CD4-positive, alpha-beta T cell (primary cell): ENCODE measurements at regions of chr3 and their contacts with region 1.

Region 1: DNA sequence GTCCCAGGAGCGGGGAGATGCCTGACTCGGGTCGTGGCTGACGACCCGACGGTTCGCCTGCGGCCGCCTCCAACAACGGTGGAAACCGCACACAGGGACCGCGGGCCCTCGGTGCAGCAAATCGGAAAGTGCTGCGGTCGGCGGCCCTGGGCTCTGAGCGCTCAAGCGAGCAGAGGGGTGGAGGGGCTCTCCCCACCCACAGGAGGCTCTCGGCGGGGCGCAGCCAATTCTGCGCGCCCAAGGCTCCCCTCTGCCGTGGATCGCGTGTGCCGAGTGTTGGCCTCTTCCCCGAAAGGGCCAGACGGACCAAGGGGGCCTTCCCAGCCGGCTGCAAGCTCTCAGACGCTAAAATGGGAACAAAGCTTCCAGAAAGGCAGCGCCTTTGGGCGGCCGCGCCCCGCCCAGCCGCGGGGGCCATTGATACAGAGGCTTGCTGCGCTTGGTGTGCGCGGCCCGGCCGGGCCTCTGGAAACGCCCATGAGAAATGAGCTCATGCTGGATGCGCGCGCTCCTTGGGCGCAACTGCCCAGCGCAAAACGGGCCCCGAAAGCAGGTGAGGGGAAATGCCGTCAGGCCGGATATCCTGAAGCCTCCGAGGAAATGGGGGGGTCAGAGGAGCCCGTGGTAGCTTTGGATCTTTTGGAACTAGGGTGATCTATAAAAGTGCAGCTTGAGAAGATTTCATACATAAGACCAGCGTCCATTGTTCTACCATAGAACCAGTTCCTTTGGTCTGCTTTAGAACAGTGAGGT is 1.2 kb upstream of the GSK3B start:
- DNase-seq: peak; percentile 61 to 94 (median 78)
- ATAC-seq: peak; percentile 19
- H3K4me3 ChIP-seq: peak overlapping the region; percentile 97
- H3K4me3 Mint-ChIP-seq: no peak overlapping the region
- H3K27ac ChIP-seq: peak overlapping the region; percentile 100
- H3K27ac Mint-ChIP-seq: no peak overlapping the region
- H3K4me1 ChIP-seq: peaks cover 20% of the 10 kb centered on the region
- H3K4me1 Mint-ChIP-seq: peaks cover 26% of the 10 kb centered on the region
- H3K27me3 ChIP-seq: no peaks in the 10 kb centered on the region
- H3K27me3 Mint-ChIP-seq: no peaks in the 10 kb centered on the region
- CTCF ChIP-seq: no peak

Region 2: DNA sequence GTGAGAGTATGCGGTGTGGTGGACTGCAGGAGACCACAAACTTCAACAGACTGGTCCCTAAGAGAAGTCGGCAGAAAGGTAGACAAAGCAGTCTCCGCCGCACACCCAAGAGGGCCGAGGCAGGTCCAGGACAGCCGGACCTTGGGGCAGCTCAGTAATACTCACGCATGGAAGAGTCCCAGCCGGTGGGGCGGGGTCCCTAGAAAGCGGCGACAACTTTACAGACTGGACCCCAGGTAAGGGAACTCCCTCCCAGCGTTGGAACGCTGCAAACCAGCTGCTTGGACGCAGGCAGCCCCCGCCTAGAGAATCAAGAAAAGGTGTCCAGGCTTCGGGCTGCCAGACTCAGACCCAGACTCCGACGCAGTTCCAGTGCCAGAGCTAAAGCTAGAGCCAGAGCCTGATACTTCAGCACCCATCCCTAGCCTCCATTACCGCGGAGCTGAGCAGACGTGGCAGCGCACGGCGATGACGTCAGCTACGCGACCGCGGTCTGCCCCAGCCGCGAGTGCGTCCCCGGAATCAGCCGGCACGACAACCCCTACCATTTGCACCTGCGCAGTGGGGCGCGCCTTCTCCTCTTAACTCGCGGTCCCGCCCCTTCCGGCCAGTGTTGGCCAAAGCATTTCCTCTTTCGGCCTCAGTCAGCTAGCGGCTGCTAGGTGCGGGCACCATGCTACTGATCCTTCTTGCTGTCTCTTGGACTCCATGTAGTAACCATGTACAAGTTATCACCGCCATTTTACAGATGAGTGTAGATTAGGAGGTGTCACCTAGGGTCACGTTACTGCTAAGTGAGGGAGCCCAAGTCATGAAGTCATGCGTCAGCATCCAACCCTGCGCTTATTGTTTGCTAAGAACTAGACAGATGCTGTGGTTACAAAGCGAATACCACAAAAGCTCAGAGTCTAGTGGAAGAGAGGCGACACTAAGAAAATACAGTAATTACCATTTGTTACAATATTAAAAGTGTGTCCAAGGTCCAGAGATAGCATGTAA is 631.9 kb before region 1 on chr3 and contains the start of gene TMEM39A:
- CTCF ChIA-PET with region 1: no interaction called
- POLR2A ChIA-PET with region 1: interaction called, 23 read pairs
- intact Hi-C with region 1: loop called (anchors 2 to 10 kb)
- DNase-seq: peak; percentile 97 to 100 (median 98)
- ATAC-seq: peak; percentile 87
- H3K4me3 ChIP-seq: peak within 1 kb of the TSS; percentile 90
- H3K4me3 Mint-ChIP-seq: peak within 1 kb of the TSS; percentile 93
- H3K27ac ChIP-seq: peak within 1 kb of the TSS; percentile 87 to 93
- H3K27ac Mint-ChIP-seq: peak within 1 kb of the TSS; percentile 97
- H3K4me1 ChIP-seq: peaks cover 28% of the 10 kb centered on the region
- H3K4me1 Mint-ChIP-seq: peaks cover 37% of the 10 kb centered on the region
- H3K27me3 ChIP-seq: no peaks in the 10 kb centered on the region
- H3K27me3 Mint-ChIP-seq: peaks cover 4% of the 10 kb centered on the region
- CTCF ChIP-seq: no peak
- total RNA-seq, gene TMEM39A: 54.1 to 58.0 TPM

Region 3: DNA sequence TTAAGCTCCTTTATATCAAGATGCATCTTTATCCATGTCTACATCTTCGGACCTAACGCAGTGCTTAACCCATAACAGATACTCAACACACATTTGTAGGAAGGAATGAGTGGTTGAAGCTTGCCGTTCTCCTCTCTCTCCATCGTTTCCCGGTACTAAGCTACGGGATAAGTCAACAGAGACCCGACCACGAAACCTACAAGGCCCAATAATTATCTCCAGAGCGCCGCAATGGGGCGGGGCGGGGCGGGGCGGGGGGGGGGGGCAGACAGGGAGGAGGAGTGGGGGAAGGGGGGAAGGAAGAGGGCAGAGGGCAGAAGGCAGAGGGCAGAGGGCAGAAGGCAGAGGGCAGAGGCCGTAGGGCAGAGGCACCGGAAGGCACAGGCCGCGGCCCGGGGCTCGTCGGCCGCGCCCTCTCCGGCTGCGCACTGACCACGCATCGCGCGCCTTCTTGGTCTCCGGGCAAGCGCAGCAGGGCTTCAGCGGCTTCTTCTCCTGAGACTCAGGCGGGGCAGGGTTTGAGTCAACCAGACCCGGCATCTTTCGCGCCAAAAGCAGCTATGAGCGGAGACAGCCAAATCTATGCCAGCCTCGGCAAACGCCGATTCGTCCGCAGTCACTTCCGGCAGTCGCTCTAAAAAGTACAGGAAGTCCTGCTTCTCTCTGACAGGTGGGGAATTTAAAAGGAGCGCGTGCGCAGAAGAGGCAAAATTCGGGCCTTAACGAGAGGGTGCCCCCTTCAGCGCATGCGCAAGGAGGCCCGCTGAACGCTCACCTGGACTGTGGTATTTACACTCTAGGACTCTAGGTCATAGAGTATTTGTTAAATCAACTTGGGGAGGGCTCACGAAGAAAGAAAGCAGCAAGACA is 418.4 kb before region 1 on chr3 and contains the start of gene COX17:
- CTCF ChIA-PET with region 1: no interaction called
- POLR2A ChIA-PET with region 1: interaction called, 10 read pairs
- intact Hi-C with region 1: loop called (anchors 5 to 10 kb)
- DNase-seq: peak; percentile 92 to 99 (median 95)
- ATAC-seq: peak; percentile 87
- H3K4me3 ChIP-seq: peak within 1 kb of the TSS; percentile 68
- H3K4me3 Mint-ChIP-seq: peak within 1 kb of the TSS; percentile 87
- H3K27ac ChIP-seq: peak within 1 kb of the TSS; percentile 81 to 85
- H3K27ac Mint-ChIP-seq: peak within 1 kb of the TSS; percentile 91
- H3K4me1 ChIP-seq: peaks cover 8% of the 10 kb centered on the region
- H3K4me1 Mint-ChIP-seq: peaks cover 36% of the 10 kb centered on the region
- H3K27me3 ChIP-seq: no peaks in the 10 kb centered on the region
- H3K27me3 Mint-ChIP-seq: no peaks in the 10 kb centered on the region
- CTCF ChIP-seq: no peak
- total RNA-seq, gene COX17: 24.6 to 26.3 TPM

Region 4: DNA sequence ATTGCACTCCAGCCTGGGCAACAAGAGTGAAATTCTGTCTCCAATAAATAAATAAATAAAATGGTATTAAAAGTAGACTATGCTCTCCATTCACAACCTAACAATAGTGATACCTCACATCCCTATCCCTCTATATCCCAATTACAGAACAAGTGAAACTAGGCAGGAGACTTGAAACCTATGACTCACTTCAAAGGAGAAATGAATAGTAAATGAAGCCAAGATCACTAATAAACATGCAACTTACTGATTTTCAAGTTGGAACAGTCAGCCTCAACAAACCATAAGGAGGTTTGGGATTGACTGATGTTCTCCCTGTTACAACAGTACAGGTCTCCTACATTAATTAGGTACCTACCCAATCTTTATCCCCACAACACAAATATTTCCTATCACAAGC is 104.5 kb before region 1 on chr3:
- CTCF ChIA-PET with region 1: no interaction called
- POLR2A ChIA-PET with region 1: interaction called, 3 read pairs
- intact Hi-C with region 1: loop called in 1 of 2 experiments (anchors 10 kb)
- DNase-seq: no peak
- ATAC-seq: no peak
- H3K4me3 ChIP-seq: no peak overlapping the region
- H3K4me3 Mint-ChIP-seq: no peak overlapping the region
- H3K27ac ChIP-seq: no peak overlapping the region
- H3K27ac Mint-ChIP-seq: no peak overlapping the region
- H3K4me1 ChIP-seq: no peaks in the 10 kb centered on the region
- H3K4me1 Mint-ChIP-seq: peaks cover 52% of the 10 kb centered on the region
- H3K27me3 ChIP-seq: no peaks in the 10 kb centered on the region
- H3K27me3 Mint-ChIP-seq: no peaks in the 10 kb centered on the region
- CTCF ChIP-seq: no peak

Region 5: GRCh38 chr3:120114981-120115380 is 19.6 kb after region 1 on chr3:
- CTCF ChIA-PET with region 1: no interaction called
- POLR2A ChIA-PET with region 1: no interaction called
- intact Hi-C with region 1: no loop called
- DNase-seq: no peak
- ATAC-seq: no peak
- H3K4me3 ChIP-seq: no peak overlapping the region
- H3K4me3 Mint-ChIP-seq: no peak overlapping the region
- H3K27ac ChIP-seq: no peak overlapping the region
- H3K27ac Mint-ChIP-seq: no peak overlapping the region
- H3K4me1 ChIP-seq: no peaks in the 10 kb centered on the region
- H3K4me1 Mint-ChIP-seq: no peaks in the 10 kb centered on the region
- H3K27me3 ChIP-seq: no peaks in the 10 kb centered on the region
- H3K27me3 Mint-ChIP-seq: no peaks in the 10 kb centered on the region
- CTCF ChIP-seq: no peak

Region 6: DNA sequence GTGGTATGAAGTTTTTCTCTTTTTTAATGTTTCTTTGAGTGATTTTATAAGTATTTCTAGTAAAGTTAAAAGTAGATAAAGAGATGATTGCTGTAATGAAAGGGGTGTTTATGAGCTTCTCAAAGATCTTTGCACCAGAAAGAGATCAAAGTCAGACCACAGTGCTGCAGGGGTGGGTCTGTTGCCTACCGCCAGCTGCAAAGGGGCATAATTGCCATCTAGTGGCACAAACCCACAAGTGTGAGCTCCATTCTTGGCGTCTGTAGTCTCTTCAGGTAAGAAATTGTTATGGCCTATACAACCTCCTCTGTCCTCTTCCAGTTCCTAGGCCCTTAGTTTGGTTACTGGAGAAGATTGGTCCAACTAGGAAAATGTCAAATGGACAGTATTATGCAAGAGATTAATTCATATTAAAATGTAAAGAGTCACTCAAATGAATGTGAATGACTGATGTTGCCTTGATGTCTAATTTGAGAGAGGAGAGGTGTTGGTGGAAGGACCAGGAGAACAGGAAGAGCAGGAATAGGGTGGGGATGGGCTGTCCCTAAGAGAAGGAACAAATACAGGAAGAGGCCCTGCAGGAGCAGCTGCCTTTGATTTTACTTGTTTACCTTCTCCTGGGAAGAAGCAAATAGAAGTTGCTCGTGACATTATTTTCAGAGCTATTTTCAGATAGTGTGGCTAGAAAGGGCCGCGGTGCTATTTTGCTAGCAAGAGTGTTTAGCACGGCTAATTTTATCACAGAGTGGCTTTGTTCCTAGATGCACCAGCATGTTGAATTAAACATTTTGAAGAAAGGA is 51.9 kb after region 1 on chr3:
- CTCF ChIA-PET with region 1: interaction called, 4 read pairs
- POLR2A ChIA-PET with region 1: interaction called, 37 read pairs
- intact Hi-C with region 1: loop called in 1 of 2 experiments (anchors 2 kb)
- DNase-seq: peak; percentile 20 to 80 (median 50)
- ATAC-seq: peak; percentile 95
- H3K4me3 ChIP-seq: no peak overlapping the region
- H3K4me3 Mint-ChIP-seq: no peak overlapping the region
- H3K27ac ChIP-seq: no peak overlapping the region
- H3K27ac Mint-ChIP-seq: no peak overlapping the region
- H3K4me1 ChIP-seq: no peaks in the 10 kb centered on the region
- H3K4me1 Mint-ChIP-seq: peaks cover 17% of the 10 kb centered on the region
- H3K27me3 ChIP-seq: no peaks in the 10 kb centered on the region
- H3K27me3 Mint-ChIP-seq: no peaks in the 10 kb centered on the region
- CTCF ChIP-seq: peak; percentile 69

Region 7: DNA sequence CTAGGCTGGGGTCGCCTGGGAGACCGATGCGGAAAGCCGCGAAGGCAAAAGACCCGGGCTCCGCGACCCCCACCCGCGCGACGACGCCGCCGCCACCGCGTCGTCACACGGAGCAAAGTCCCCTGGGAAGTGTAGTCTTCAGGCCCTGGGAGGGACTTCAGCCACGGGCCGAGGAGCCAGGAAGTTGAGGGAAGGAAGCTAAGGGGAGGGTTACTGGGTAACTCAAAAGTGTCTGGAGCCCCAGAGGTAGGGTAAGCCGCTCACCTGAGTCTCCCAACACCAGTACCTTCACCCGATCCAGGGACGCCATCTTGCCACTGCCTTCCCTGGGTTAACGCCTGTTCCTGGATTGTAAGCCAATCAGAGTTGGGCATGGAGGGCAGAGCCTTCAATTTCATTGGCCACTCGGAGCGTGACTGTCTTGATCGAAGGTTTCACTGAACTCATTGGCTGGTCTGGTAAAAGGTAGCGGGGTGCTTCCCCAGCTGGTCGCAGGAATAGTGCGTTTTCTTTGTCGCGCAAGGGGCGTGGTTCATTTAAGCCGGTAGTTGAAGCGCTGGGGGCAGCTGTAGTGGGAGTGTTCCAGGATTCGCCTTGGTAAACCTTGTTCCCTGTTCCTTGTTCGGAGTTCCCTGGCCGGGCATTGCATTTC is 646.9 kb after region 1 on chr3 and contains the starts of genes GTF2E1 and RABL3:
- CTCF ChIA-PET with region 1: interaction called, 3 read pairs
- POLR2A ChIA-PET with region 1: interaction called, 9 read pairs
- intact Hi-C with region 1: loop called in 1 of 2 experiments (anchors 10 kb)
- DNase-seq: peak; percentile 90 to 99 (median 94)
- ATAC-seq: peak; percentile 94
- H3K4me3 ChIP-seq: peak within 1 kb of the TSS; percentile 61
- H3K4me3 Mint-ChIP-seq: peak within 1 kb of the TSS; percentile 95
- H3K27ac ChIP-seq: peak within 1 kb of the TSS; percentile 99
- H3K27ac Mint-ChIP-seq: peak within 1 kb of the TSS; percentile 96
- H3K4me1 ChIP-seq: peaks cover 25% of the 10 kb centered on the region
- H3K4me1 Mint-ChIP-seq: peaks cover 50% of the 10 kb centered on the region
- H3K27me3 ChIP-seq: no peaks in the 10 kb centered on the region
- H3K27me3 Mint-ChIP-seq: no peaks in the 10 kb centered on the region
- CTCF ChIP-seq: no peak
- total RNA-seq, gene GTF2E1: 6.3 to 7.5 TPM
- total RNA-seq, gene RABL3: 12.9 to 13.6 TPM